Ascending aorta (tissue), 2 donors: ENCODE measurements at regions of chr2 and their contacts with region 1.

Region 1: GRCh38 chr2:44955593-44956392 is 14.3 kb downstream of the SIX3 start:
- DNase-seq: no peak
- H3K4me3 ChIP-seq: peak overlapping the region; percentile 33 to 60
- H3K27ac ChIP-seq: no peak overlapping the region
- H3K4me1 ChIP-seq: peaks cover 13 to 23% of the 10 kb centered on the region in 2 donors
- H3K27me3 ChIP-seq: peaks cover 14% of the 10 kb centered on the region
- CTCF ChIP-seq: peak; percentile 81 to 88 (median 83)

Region 2: DNA sequence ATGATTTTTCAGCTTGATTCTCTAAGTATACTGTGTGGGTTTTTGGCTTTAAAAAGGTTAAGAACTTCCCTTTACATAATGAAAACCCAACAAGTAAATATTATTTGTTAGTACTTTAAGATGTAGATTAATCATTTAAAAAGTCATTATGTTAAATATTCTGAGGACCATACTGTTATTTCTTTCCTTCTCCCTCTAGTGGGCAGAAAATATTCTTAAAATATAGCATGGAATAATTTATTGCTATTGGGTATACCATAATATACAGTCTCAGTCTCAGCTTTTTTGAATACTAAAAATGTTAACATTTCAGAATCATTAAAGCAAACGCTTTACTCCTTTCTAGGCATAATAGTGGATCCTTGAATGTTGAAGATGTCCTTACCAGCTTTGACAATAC is 565.9 kb before region 1 on chr2:
- intact Hi-C with region 1: loop called (anchors 2 kb)
- DNase-seq: no peak
- H3K4me3 ChIP-seq: no peak overlapping the region
- H3K27ac ChIP-seq: no peak overlapping the region
- H3K4me1 ChIP-seq: no peaks in the 10 kb centered on the region
- H3K27me3 ChIP-seq: no peaks in the 10 kb centered on the region
- CTCF ChIP-seq: peak in 1 of 3 experiments; percentile 12

Region 3: DNA sequence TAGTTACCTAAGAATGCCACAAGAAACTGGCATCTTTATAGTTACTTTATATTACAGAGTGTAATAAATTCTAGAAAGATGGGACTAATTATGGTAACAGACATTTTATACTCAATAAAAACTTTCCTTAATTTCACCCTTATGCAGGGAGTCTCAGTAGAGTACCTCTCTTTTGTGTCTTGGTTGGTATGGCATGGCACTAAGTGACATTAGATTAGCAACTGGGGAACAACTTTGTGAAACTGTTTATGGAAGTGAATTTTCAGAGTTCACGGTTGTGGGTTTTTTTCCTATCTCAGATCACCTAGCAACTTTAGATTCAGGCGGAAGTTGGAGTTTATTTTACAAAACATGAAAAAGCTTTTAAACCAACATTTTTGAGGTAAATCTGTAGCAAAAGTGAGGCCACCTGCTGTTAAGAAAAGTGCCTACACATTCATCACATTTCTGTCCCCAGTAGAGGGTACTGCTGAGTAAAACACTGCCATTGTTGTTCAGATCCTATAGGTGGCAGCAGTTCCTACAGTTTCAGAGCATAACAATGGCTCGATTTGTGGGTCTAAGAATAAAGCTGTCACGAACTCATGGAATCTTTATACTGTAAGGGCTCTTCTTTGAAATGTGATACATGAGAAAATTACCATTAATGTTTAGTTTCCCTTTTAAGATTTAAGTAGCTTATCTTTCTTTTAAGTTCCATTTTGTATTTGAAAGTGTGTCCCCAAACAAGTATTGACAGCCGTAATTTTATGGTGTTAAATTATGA is 476.5 kb before region 1 on chr2:
- intact Hi-C with region 1: loop called (anchors 1 kb)
- DNase-seq: peak in 1 of 2 donors; percentile 64
- H3K4me3 ChIP-seq: no peak overlapping the region
- H3K27ac ChIP-seq: no peak overlapping the region
- H3K4me1 ChIP-seq: no peaks in the 10 kb centered on the region
- H3K27me3 ChIP-seq: no peaks in the 10 kb centered on the region
- CTCF ChIP-seq: peak; percentile 93 to 98 (median 97)